Activated CD8-positive, alpha-beta T cell treated with anti-CD3 and anti-CD28 coated beads, Interleukin-2, amount 10 ng/mL, durations not matched to agents 7 days and 5 days (primary cell): ENCODE measurements at regions of chr9 and their contacts with region 1.

Region 1: DNA sequence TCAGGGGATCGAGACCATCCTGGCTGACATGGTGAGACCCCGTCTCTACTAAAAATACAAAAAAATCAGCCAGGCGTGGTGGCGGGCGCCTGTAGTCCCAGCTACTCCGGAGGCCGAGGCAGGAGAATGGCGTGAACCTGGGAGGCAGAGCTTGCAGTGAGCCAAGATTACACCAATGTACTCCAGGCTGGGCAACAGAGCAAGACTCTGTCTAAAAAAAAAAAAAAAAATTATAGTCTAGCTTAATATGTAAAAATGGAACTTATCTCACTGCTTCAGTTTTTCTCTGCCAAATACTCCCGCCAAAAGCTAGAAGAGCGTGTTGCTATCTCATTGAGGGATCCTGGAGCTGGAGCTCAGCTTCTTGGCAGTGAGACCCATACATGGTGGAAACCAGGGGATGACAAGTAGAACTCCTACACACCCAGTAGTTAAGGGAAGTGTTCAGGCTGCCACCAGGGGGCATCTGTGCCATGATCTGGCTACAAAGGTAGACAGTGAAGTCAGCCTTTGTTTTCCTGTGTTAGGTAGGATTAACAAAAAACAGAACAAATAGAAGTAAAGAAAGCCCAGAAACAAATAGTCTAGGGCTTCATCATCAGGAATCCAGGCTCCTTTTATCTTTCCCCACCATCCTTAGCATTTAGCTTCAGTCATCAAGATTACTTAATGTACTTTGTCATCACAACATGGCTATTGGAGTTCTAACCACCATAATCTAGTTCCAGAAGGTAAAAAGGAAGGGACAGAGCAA is 33.6 kb upstream of the GLIPR2 start:
- DNase-seq: peak; percentile 91
- ATAC-seq: peak; percentile 100
- H3K4me3 Mint-ChIP-seq: no peak overlapping the region
- H3K27ac Mint-ChIP-seq: no peak overlapping the region
- H3K4me1 Mint-ChIP-seq: peaks cover 10% of the 10 kb centered on the region
- H3K27me3 Mint-ChIP-seq: no peaks in the 10 kb centered on the region

Region 2: DNA sequence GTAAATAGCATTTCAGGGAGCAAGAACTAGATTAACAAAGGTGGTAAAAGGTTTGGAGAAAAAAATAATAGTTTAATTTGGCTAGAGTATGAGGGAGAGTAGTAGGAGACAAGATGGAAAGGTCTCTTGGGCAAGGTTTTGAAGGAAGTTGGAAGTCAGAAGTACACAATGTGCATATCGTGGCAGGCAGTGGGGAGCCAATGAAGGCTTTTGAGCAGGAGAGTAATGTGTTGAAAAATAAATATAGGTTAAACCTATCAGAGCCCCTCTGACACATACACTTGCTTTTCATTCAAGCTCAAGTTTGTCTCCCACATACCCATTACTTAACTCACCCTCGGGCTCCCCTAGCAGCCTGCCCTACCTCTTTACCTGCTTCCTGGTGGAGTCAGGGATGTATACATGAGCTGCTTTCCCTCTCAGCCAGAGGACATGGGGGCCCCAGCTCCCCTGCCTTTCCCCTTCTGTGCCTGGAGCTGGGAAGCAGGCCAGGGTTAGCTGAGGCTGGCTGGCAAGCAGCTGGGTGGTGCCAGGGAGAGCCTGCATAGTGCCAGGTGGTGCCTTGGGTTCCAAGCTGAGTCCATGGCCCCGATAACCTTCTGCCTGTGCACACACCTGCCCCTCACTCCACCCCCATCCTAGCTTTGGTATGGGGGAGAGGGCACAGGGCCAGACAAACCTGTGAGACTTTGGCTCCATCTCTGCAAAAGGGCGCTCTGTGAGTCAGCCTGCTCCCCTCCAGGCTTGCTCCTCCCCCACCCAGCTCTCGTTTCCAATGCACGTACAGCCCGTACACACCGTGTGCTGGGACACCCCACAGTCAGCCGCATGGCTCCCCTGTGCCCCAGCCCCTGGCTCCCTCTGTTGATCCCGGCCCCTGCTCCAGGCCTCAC is 429.5 kb before region 1 on chr9 and contains the start of gene CA9:
- CTCF ChIA-PET with region 1: no interaction called
- POLR2A ChIA-PET with region 1: no interaction called
- DNase-seq: no peak
- ATAC-seq: no peak
- H3K4me3 Mint-ChIP-seq: no peak within 1 kb of the TSS
- H3K27ac Mint-ChIP-seq: no peak within 1 kb of the TSS
- H3K4me1 Mint-ChIP-seq: peaks cover 15% of the 10 kb centered on the region
- H3K27me3 Mint-ChIP-seq: peaks cover 21% of the 10 kb centered on the region
- total RNA-seq, gene CA9: 0.50 to 1.3 TPM

Region 3: DNA sequence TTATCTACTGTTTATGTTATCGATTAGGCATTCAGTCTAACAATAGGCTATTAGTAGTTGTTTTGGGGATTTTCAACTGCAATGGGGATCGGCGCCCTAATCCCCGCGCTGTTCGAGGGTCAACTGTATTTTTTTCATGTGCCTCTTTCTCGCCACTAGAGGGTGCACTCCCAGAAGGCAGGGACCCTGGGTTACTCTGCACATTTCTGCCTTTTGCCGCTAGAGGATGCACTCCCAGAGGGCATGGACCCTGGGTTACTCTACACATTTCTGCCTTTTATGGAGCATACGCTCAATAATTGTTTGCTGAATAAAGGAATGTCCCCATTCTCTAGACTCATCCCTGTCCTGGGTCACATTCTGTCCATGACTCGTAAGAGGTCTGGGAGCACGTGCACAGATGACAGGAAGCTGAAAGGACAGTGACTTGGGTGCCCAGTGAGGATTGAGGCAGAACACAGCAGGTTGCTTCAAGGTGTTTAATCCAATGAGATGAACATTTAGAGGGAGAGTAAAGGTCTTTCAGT is 94.1 kb before region 1 on chr9:
- CTCF ChIA-PET with region 1: interaction called, 17 read pairs
- POLR2A ChIA-PET with region 1: no interaction called
- DNase-seq: peak; percentile 84
- ATAC-seq: peak; percentile 99
- H3K4me3 Mint-ChIP-seq: no peak overlapping the region
- H3K27ac Mint-ChIP-seq: no peak overlapping the region
- H3K4me1 Mint-ChIP-seq: peaks cover 10% of the 10 kb centered on the region
- H3K27me3 Mint-ChIP-seq: peaks cover 51% of the 10 kb centered on the region

Region 4: GRCh38 chr9:36086442-36086841 is 16.5 kb before region 1 on chr9:
- CTCF ChIA-PET with region 1: interaction called, 34 read pairs
- POLR2A ChIA-PET with region 1: no interaction called
- DNase-seq: no peak
- ATAC-seq: no peak
- H3K4me3 Mint-ChIP-seq: no peak overlapping the region
- H3K27ac Mint-ChIP-seq: no peak overlapping the region
- H3K4me1 Mint-ChIP-seq: no peaks in the 10 kb centered on the region
- H3K27me3 Mint-ChIP-seq: no peaks in the 10 kb centered on the region

Region 5: DNA sequence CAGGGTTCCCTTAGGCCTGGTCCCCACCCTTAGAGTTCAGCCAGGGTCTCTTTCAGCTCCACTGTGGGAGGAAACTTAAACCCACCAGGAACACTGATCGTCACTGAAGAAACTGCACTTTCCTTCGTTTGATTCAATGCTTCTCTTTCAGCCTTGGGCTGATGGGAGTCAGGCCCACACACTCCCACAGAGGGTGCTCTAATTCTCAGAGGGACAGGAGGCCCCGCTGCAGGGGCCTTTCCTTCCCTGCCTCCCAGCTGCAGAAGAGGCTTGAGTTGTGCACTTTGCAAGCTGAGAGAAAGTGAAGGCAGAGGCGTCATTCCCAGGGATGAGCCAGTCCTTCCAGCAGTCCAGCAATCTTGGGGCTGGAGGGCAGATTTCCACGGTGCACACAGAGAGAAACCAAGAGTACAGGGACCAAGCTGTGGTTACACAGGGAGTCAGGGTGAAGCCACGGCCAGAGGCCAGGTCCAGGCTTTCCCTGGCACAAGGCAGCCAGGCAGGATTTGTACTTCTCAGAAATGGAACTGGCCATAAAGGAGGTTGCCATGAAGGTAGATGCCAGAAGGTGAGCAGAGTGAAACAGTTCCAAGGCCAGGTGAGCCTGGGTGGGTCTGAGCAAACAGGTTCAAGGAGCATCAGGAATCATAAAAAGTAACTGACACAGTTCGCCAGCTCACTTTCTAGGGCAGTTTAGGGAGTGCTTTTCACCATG is 23.3 kb after region 1 on chr9:
- CTCF ChIA-PET with region 1: interaction called, 28 read pairs
- POLR2A ChIA-PET with region 1: no interaction called
- DNase-seq: no peak
- ATAC-seq: no peak
- H3K4me3 Mint-ChIP-seq: no peak overlapping the region
- H3K27ac Mint-ChIP-seq: no peak overlapping the region
- H3K4me1 Mint-ChIP-seq: peaks cover 33% of the 10 kb centered on the region
- H3K27me3 Mint-ChIP-seq: no peaks in the 10 kb centered on the region

Region 6: GRCh38 chr9:36148311-36149051 is 45.6 kb after region 1 on chr9:
- CTCF ChIA-PET with region 1: interaction called, 66 read pairs
- POLR2A ChIA-PET with region 1: interaction called, 4 read pairs
- DNase-seq: peak; percentile 77
- ATAC-seq: peak; percentile 40
- H3K4me3 Mint-ChIP-seq: no peak overlapping the region
- H3K27ac Mint-ChIP-seq: peak overlapping the region; percentile 75
- H3K4me1 Mint-ChIP-seq: peaks cover 89% of the 10 kb centered on the region
- H3K27me3 Mint-ChIP-seq: no peaks in the 10 kb centered on the region

Region 7: DNA sequence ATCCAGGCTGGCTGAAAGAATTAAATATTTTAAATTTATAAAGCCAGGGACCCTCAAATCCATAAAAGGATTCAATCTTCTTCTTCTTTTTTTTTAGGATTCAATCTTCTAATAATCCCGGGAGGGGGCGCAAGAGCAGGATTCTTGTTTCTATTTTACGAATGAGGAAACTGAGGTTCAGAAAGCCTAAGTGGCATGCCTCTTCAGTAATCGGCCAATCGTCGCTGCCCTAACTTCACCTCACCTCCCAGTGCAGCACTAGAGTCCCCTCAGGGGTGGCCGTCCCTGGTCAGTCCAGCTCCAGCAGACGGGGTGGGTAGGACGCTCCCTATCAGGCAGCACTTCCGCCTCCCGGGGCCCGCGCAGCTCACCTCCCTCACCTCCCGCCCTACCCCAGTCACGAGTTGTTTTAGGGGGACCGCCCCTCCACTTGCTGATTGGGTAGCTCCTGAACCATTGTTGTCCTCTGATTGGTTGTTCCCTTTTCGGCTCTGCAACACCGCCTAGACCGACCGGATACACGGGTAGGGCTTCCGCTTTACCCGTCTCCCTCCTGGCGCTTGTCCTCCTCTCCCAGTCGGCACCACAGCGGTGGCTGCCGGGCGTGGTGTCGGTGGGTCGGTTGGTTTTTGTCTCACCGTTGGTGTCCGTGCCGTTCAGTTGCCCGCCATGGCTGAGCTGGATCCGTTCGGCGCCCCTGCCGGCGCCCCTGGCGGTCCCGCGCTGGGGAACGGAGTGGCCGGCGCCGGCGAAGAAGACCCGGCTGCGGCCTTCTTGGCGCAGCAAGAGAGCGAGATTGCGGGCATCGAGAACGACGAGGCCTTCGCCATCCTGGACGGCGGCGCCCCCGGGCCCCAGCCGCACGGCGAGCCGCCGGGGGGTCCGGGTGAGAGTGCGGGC is 87.7 kb after region 1 on chr9 and contains the start of gene CLTA:
- CTCF ChIA-PET with region 1: interaction called, 71 read pairs
- POLR2A ChIA-PET with region 1: interaction called, 14 read pairs
- DNase-seq: peak; percentile 98
- ATAC-seq: peak; percentile 98
- H3K4me3 Mint-ChIP-seq: peak within 1 kb of the TSS; percentile 93
- H3K27ac Mint-ChIP-seq: peak within 1 kb of the TSS; percentile 91
- H3K4me1 Mint-ChIP-seq: peaks cover 55% of the 10 kb centered on the region
- H3K27me3 Mint-ChIP-seq: peaks cover 8% of the 10 kb centered on the region
- total RNA-seq, gene CLTA: 167 to 170 TPM